Activated CD4-positive, alpha-beta T cell treated with anti-CD3 and anti-CD28 coated beads for 36 hours (primary cell): ENCODE measurements at regions of chr3 and their contacts with region 1.

Region 1: DNA sequence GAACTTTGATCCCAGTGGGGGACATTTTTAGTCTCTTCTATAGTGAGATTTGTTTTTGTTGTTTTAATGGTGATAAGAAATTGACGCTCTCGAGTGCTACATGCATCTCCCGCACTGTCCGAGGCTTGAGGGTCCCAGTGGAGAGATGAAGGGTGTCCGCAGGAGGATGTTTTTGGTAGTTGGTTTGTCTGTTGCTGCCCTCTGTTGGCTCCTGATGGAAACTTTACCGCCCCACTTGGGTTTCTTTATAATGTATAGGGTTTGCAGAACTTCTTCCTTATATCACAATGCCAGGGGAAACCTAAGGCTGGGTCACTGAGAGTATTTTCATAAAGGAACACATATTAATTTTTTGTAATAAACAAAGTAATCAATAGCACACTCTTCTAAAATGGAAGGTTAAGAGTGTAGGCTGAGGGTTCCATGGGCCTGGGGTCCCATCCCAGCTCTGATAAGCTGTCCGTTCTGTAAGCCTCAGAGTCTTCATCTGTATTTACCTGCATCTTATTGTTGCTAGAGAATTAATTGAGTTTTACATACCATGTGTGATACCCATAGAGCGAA is 185.3 kb upstream of the FEZF2 start:
- DNase-seq: peak; percentile 14
- ATAC-seq: no peak
- H3K4me3 Mint-ChIP-seq: no peak overlapping the region
- H3K27ac Mint-ChIP-seq: no peak overlapping the region
- H3K4me1 Mint-ChIP-seq: no peaks in the 10 kb centered on the region
- H3K27me3 Mint-ChIP-seq: no peaks in the 10 kb centered on the region

Region 2: GRCh38 chr3:62201438-62202035 is 357.1 kb before region 1 on chr3:
- CTCF ChIA-PET with region 1: interaction called, 3 read pairs
- POLR2A ChIA-PET with region 1: no interaction called
- intact Hi-C with region 1: loop called (anchors 2 to 5 kb)
- DNase-seq: no peak
- ATAC-seq: no peak
- H3K4me3 Mint-ChIP-seq: no peak overlapping the region
- H3K27ac Mint-ChIP-seq: no peak overlapping the region
- H3K4me1 Mint-ChIP-seq: no peaks in the 10 kb centered on the region
- H3K27me3 Mint-ChIP-seq: no peaks in the 10 kb centered on the region

Region 3: DNA sequence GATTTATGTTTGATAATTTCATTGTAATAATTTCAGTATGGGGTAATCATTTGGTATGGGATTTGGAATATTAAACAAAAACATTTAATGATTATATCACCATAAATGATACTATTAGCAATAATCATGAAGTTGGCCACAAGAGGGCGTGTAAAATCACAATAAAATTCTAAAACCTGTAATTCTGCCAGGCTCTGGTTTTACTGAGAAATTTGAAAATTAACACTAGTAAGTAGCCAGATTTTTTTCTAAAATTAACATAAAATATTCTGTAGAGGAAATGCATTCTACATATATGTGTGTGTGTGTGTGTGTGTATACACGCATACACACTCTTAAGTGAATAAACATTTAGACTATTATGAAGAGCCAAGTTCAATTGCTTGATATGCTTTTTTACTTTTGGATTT is 225.8 kb before region 1 on chr3:
- CTCF ChIA-PET with region 1: no interaction called
- POLR2A ChIA-PET with region 1: no interaction called
- intact Hi-C with region 1: loop called (anchors 2 kb)
- DNase-seq: no peak
- ATAC-seq: no peak
- H3K4me3 Mint-ChIP-seq: no peak overlapping the region
- H3K27ac Mint-ChIP-seq: no peak overlapping the region
- H3K4me1 Mint-ChIP-seq: no peaks in the 10 kb centered on the region
- H3K27me3 Mint-ChIP-seq: peaks cover 3% of the 10 kb centered on the region